ENCODE measurements at regions of chr17 and their contacts with region 1.

Region 1: GRCh38 chr17:7561028-7561575 is 617 bp upstream of the SENP3 start:
- DNase-seq: peak; percentile 94
- CTCF ChIP-seq: peak; percentile 94

Region 2: DNA sequence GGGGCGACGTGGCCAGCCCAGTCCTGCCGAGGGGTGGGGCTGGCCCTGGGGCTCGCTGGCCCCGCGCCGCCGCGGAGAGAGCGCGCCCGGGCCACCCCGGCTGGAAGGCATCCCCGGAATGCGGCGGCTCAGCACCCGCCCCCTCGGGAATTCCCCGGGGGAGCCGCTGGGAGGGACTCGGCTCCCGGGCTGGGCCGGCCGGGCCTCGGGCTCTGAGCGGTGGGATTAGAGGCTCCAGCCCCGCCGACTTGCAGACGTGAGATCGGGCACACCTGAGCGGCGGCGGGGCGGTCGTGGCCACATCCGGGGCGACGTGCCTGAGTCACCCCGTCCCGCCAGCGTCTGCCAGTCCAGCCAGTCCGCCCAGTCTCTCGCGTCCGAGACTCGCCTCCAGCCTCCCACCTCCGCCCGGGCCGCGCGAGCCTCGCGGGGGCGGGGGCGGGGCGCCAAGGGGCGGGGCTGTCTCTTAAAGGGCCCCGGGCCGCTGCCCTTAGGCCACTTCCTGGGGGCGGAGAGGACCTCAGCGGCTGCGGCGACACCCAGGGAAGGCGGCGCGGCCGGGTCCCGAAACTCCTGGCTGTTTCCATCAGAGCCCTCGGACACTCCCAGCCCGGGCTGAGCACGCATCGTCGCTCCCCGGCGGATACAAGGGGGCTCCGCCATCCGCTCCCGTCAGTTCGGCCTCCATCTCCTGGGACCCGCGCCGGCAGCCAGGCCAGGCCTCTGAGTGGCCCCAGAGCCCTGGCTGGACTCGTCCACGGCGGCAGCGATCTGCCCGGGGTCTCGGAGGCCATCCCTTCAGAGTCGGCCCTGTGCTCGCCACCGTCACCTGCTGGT is 209.2 kb before region 1 on chr17 and contains the start of gene KCTD11:
- in situ Hi-C with region 1: loop called (anchors 25 kb)
- DNase-seq: peak; percentile 96
- CTCF ChIP-seq: peak; percentile 60

Region 3: DNA sequence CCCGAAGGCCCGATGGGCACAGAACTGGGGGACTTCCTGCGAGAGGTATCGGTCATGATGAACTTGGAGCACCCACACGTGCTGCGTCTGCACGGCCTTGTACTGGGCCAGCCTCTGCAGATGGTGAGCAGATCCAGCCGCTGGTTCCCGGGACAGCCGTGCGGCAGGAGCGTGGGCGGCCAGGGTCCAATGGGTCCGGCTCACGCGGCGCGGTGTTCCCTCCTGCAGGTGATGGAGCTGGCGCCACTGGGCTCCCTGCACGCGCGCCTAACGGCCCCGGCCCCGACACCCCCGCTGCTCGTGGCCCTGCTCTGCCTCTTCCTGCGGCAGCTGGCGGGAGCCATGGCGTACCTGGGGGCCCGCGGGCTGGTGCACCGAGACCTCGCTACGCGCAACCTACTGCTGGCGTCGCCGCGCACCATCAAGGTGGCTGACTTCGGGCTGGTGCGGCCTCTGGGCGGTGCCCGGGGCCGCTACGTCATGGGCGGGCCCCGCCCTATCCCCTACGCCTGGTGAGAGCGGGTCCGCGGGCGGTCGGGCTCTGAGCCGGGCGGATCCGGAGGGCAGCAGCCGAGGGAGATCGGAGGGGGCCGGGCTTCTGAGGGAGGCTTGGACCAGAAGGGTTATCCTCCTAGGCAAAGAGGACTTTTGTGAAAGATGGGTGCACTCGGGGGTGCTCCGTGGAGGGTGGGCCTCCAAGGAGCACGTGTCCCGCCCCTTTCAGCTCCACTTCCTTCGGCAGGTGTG is 177.2 kb before region 1 on chr17:
- in situ Hi-C with region 1: no loop called
- DNase-seq: peak; percentile 94
- CTCF ChIP-seq: no peak

Region 4: DNA sequence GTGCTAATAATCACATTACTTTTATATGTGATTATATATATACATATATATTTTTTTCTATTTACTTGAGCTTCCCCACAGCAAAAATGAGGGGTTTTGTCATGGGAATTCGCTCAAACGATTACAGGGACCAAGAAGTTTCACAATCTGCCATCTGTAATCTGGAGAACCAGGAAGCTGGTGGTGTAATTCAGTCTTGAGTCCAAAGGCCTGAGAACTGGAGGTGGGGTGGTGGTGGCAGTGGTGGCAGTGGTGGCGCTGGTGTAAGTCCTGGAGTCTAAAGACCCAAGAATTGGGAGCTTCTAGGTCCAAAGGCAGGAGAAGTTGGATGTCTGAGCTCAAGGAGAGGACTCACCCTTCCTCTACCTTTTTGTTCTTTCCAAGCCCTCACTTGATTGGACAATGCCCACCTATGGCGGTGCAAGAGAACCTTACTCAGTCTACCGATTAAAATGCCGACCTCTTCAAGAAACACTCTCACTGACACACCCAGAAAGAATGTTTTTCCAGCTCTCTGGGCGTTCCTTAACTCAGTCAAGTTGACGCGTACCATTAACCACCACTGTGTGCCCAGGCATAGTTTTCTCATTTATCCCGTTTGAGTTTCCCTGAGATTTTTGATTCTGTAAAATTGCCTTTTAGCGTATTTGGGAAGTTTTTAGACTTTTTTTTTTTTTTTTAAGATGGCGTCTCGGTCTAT is 45.0 kb before region 1 on chr17:
- in situ Hi-C with region 1: loop called (anchors 5 kb)
- DNase-seq: no peak
- CTCF ChIP-seq: no peak